CD4-positive, alpha-beta memory T cell (primary cell): ENCODE measurements at regions of chr10 and their contacts with region 1.

Region 1: GRCh38 chr10:104614245-104614831 is 26.8 kb upstream of the SORCS3 start:
- DNase-seq: peak in 4 of 5 donors; percentile 3 to 10 (median 6)
- H3K4me3 ChIP-seq: no peak overlapping the region
- H3K4me3 Mint-ChIP-seq: peak overlapping the region in 1 of 8 donors; percentile 42
- H3K27ac ChIP-seq: no peak overlapping the region
- H3K27ac Mint-ChIP-seq: no peak overlapping the region
- H3K4me1 ChIP-seq: no peaks in the 10 kb centered on the region
- H3K4me1 Mint-ChIP-seq: no peaks in the 10 kb centered on the region
- H3K27me3 ChIP-seq: no peaks in the 10 kb centered on the region
- H3K27me3 Mint-ChIP-seq: peaks cover 8 to 13% of the 10 kb centered on the region in 2 donors

Region 2: DNA sequence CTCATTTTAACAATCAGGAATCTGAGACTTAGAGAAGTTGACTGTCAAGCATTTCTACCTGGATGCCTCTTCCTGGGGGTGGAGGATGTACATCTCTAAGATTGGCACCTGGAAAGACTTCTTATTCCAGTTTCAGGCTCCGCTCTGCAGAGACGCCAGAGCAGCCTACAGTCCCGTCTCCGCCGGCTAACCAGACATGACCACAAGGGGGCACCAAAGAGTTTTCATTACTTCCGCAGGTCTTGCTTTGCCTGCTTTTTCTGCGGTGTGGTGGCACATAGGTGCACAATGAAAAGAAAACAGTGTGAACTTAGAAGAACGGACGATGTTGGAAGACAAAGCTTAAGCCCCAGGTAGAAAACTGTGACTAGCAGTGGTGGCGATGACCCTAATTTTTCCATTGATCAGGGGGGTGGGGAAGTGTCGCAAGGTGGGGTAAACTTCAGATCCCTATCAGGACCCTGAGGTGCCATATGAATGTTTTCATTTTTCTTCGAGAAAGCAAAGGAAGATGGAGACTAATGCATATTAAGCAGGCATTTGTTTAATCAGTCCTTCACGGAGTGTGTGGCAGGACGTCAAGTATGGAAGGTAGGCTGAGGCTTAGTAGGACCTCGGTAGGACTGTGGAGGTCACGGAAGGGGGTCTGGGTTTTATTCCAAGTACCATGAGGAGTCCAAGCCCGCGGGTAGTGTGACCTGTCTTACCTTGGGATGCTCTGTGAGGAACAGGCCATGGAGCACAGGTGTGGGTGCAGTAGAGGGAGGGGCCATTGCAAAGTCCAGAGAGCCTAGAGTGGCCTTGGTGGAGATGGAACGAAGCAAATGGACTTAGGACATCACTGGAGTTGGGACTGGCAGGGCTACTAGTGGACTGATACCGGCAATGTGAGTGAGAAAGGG is 33.3 kb before region 1 on chr10:
- CTCF ChIA-PET with region 1: no interaction called
- POLR2A ChIA-PET with region 1: no interaction called
- intact Hi-C with region 1: loop called (anchors 2 kb)
- DNase-seq: peak; percentile 48 to 62 (median 60)
- H3K4me3 ChIP-seq: no peak overlapping the region
- H3K4me3 Mint-ChIP-seq: peak overlapping the region in 2 of 8 donors; percentile 38 to 60
- H3K27ac ChIP-seq: no peak overlapping the region
- H3K27ac Mint-ChIP-seq: peak overlapping the region in 2 of 7 donors; percentile 0 to 10
- H3K4me1 ChIP-seq: no peaks in the 10 kb centered on the region
- H3K4me1 Mint-ChIP-seq: peaks cover 6 to 13% (median 9%) of the 10 kb centered on the region in 4 donors
- H3K27me3 ChIP-seq: no peaks in the 10 kb centered on the region
- H3K27me3 Mint-ChIP-seq: peaks cover 16 to 32% of the 10 kb centered on the region in 2 donors